Mammary epithelial cell (primary cell): ENCODE measurements at regions of chrX and their contacts with region 1.

Region 1: DNA sequence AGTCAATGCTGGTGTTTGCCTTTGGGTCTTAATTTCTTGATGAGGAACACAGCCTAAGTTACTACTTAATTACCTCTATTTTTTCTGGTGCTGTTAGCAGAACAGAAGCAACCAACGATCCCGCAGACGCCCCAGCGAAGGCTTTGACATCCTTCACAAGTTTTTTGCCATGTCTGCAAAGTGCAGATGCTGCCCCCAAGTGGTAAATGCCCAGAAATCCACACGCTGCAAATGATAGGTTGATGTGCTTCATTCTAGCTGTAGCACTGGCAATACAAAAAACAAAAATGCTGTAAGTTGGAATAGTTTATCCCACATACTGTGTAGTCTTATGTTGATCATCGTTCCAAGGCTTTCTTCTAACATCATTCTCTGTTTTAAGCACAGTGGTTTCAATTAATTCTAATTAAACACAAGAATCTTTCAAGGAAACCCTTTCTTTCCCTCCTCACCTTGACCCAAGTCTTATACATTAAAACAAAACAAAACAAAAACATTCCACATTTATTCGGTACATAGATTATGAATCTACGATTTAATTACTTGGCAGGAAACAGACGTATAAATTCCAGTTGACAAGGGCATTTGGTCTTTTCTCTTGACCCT is 1.2 kb downstream of the PNPLA4 start:
- DNase-seq: peak; percentile 65
- H3K4me3 ChIP-seq: peak overlapping the region in 2 of 3 experiments; percentile 79 to 82
- H3K27ac ChIP-seq: no peak overlapping the region
- H3K4me1 ChIP-seq: peaks cover 13% of the 10 kb centered on the region
- H3K27me3 ChIP-seq: no peaks in the 10 kb centered on the region
- CTCF ChIP-seq: peak; percentile 91 to 95

Region 2: DNA sequence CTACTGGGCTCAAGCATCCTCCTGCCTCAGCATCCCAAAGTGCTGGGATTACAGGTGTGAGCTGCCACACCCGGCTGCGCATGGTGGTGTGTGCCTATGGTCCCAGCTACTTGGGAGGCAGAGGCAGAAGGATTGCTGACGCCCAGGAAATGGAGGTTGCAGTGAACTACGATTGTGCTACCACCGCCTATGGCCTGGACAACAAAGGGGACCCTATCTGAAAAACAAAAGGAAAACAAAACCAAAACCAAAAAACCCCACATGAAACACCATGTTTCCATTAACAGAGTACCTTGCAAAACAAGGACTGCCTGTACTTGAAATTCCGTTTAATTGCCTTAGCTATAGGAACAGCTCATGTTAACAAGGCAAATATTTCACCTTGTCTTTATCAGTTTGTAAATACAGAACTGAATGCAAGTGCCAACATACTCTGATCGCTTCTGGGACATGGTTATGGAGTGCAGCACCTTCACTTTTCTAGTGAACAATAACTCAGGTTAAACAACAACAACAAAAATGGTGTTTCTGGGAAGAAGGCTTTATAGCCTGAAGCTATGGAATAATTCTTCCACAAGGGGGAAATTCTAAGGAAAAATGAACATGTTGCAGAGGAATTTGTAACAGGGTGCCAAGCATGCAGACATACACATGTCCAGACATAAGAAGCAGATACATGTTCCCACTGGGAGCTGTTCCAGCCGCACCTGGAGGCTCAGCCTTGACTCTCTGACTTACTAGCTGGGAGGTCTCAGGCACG is 851.6 kb before region 1 on chrX:
- CTCF ChIA-PET with region 1: no interaction called
- dilution Hi-C with region 1: no loop called
- in situ Hi-C with region 1: no loop called
- intact Hi-C with region 1: loop called (anchors 10 kb)
- DNase-seq: peak; percentile 30
- H3K4me3 ChIP-seq: no peak overlapping the region
- H3K27ac ChIP-seq: no peak overlapping the region
- H3K4me1 ChIP-seq: peaks cover 4% of the 10 kb centered on the region
- H3K27me3 ChIP-seq: peaks cover 2% of the 10 kb centered on the region
- CTCF ChIP-seq: no peak

Region 3: DNA sequence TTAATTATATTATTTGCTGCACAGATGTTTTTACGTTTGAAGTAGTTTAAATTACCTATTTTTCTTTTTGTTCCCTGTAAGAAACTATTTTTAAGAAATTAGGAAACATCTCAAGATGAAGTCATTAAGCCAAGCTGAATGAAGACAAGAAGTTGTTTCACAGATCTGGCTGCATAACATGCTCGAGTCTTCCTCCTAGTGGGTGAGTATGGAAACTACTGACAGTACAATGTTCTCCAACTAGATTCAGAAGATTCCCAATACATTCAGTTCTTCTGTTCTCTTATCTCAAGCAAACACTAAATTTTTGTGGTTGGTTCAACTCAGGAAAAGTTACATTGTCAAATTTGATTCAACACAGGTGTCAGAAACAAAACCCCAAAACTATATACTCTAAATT is 339.8 kb before region 1 on chrX:
- CTCF ChIA-PET with region 1: no interaction called
- dilution Hi-C with region 1: no loop called
- in situ Hi-C with region 1: no loop called
- intact Hi-C with region 1: loop called (anchors 5 kb)
- DNase-seq: peak; percentile 16
- H3K4me3 ChIP-seq: no peak overlapping the region
- H3K27ac ChIP-seq: no peak overlapping the region
- H3K4me1 ChIP-seq: no peaks in the 10 kb centered on the region
- H3K27me3 ChIP-seq: peaks cover 2% of the 10 kb centered on the region
- CTCF ChIP-seq: peak; percentile 57 to 71

Region 4: GRCh38 chrX:7711167-7711566 is 214.8 kb before region 1 on chrX:
- CTCF ChIA-PET with region 1: no interaction called
- dilution Hi-C with region 1: no loop called
- in situ Hi-C with region 1: no loop called
- intact Hi-C with region 1: loop called (anchors 10 kb)
- DNase-seq: peak; percentile 61
- H3K4me3 ChIP-seq: no peak overlapping the region
- H3K27ac ChIP-seq: peak overlapping the region; percentile 11
- H3K4me1 ChIP-seq: peaks cover 5% of the 10 kb centered on the region
- H3K27me3 ChIP-seq: no peaks in the 10 kb centered on the region
- CTCF ChIP-seq: no peak

Region 5: DNA sequence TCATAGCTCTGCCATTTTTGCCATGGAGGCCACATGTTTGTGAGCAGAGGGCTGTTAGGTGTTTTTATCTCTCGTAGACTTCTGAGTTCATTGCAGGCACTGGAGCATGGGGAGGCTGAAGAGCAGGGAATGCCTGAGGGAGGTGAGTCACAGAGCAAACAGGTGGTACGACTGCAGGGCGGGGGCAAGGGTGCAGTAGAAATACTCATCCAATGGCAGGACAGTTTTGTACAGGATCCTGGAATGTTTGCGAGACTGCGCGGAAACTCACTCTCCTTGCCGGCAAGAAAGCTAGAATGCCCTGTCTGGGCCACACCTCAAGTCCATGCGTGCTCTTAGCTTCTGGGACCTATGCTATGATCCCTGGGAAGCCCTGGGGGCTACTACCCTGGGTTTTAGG is 265.1 kb after region 1 on chrX:
- CTCF ChIA-PET with region 1: no interaction called
- dilution Hi-C with region 1: no loop called
- in situ Hi-C with region 1: no loop called
- intact Hi-C with region 1: no loop called
- DNase-seq: peak; percentile 9
- H3K4me3 ChIP-seq: no peak overlapping the region
- H3K27ac ChIP-seq: no peak overlapping the region
- H3K4me1 ChIP-seq: no peaks in the 10 kb centered on the region
- H3K27me3 ChIP-seq: no peaks in the 10 kb centered on the region
- CTCF ChIP-seq: no peak